GM12878 (cell line): ENCODE measurements at regions of chr6 and their contacts with region 1.

Region 1: DNA sequence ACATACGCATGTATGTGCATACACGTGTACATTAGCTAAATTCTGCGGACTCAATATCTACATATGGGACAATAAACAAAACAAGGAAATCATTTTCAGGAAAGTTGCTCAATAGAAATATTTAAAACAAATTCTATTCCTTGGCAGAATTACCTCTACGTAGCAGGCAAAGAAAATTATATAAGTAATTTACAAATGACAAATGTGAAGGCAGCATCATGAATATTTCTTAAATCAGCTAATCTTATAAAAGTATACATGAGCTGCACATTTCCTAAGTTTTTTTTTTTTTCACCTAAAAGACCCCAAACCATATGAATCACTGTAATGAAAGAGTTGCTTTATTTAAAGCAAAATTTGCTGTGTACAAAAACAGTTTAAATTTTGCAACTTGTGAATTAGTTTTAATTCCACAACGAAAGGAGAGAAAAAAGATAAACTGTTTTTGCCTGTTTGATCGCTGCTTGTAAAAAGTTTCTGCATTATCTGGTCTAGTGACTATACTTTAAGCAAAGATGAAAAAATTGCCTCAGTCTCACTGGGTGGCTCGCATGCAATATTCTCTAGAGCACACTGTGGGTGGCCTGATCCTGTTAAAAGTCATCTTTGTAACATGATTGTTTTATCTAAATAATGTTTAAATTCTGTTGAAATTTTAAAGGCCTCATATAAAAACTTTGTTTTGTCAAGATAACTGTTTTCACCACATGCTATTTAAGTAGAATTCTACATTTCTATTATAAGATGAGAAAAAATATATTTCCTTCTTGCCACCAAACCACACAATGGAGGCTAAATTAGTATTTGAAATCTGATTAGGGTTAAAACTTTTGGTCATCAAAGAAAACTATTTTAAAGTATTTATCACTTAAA is 57.1 kb downstream of the HUS1B start:
- DNase-seq: no peak
- ATAC-seq: no peak
- H3K4me3 ChIP-seq: no peak overlapping the region
- H3K27ac ChIP-seq: no peak overlapping the region
- H3K4me1 ChIP-seq: no peaks in the 10 kb centered on the region
- H3K27me3 ChIP-seq: no peaks in the 10 kb centered on the region
- CTCF ChIP-seq: no peak
- EP300 ChIP-seq: no peak
- POLR2A ChIP-seq: no peak
- RAD21 ChIP-seq: no peak

Region 2: DNA sequence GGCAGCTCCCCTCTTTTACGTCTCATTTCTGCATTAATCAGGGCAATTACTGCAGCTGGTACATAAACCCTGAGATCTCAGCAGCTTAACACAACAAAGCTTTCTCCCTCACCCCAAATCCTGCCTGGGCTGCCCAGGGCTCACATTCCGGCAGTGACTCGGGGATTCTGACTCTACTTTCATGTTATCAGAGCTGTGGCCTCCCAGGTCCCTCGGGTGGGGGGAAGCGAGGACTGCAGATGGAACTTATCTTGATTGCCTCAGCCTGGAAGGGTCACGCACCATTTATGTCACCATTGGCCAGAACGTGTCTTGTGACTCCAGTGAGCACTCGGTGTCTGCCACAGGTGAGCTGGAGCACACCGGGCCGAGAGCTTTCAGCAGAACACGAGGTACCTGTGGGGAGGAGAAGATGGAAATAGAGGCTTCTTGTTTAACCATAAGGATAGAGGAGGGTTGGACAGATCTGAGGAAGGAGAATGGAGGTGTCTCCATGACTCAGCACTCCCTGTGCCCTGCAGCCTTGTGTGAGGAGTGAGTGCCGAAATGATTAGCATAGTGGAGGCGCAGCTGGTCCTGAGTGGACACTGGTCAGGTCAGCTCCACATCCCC is 181.6 kb after region 1 on chr6:
- CTCF ChIA-PET with region 1: no interaction called
- POLR2A ChIA-PET with region 1: no interaction called
- RAD21 ChIA-PET with region 1: no interaction called
- SMC1A ChIA-PET with region 1: interaction called, 4 read pairs
- in situ Hi-C with region 1: loop called (anchors 5 kb)
- intact Hi-C with region 1: no loop called
- DNase-seq: no peak
- ATAC-seq: no peak
- H3K4me3 ChIP-seq: no peak overlapping the region
- H3K27ac ChIP-seq: no peak overlapping the region
- H3K4me1 ChIP-seq: no peaks in the 10 kb centered on the region
- H3K27me3 ChIP-seq: peaks cover 0 to 7% of the 10 kb centered on the region in 2 experiments
- CTCF ChIP-seq: no peak
- EP300 ChIP-seq: no peak
- POLR2A ChIP-seq: no peak
- RAD21 ChIP-seq: no peak